Activated T-helper 1 cell treated with anti-CD3 and anti-CD28 coated beads, Interleukin-12 subunit alpha, Interleukin-12 subunit beta, Interleukin-2, Interleukin-4 antibody, amounts not matched to agents 30 ng/mL and 10 ng/mL and 1 ng/mL, durations not matched to agents 14 hours and 24 hours and 36 hours (primary cell): ENCODE measurements at regions of chr12 and their contacts with region 1.

Region 1: DNA sequence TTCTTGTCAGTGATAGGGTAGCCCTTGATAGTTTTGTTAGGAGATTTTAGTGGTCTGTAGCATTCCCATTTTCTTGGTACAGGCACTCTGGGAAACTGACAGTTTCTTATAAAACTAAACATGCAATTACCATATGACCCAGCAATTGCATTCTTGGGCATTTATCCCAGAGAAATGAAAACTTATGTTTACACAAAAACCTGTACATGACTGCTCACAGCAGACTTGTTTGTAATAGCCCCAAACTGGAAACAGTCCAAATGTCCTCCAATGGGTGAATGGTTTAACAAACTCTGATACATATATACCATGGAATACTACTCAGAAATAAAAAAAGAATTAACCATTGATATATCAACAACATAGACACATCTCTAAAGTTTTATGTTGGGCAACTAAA is 75.5 kb downstream of the BORCS5 start:
- DNase-seq: no peak
- H3K4me3 Mint-ChIP-seq: no peak overlapping the region
- H3K27ac Mint-ChIP-seq: no peak overlapping the region
- H3K4me1 Mint-ChIP-seq: peaks cover 48% of the 10 kb centered on the region
- H3K27me3 Mint-ChIP-seq: no peaks in the 10 kb centered on the region

Region 2: DNA sequence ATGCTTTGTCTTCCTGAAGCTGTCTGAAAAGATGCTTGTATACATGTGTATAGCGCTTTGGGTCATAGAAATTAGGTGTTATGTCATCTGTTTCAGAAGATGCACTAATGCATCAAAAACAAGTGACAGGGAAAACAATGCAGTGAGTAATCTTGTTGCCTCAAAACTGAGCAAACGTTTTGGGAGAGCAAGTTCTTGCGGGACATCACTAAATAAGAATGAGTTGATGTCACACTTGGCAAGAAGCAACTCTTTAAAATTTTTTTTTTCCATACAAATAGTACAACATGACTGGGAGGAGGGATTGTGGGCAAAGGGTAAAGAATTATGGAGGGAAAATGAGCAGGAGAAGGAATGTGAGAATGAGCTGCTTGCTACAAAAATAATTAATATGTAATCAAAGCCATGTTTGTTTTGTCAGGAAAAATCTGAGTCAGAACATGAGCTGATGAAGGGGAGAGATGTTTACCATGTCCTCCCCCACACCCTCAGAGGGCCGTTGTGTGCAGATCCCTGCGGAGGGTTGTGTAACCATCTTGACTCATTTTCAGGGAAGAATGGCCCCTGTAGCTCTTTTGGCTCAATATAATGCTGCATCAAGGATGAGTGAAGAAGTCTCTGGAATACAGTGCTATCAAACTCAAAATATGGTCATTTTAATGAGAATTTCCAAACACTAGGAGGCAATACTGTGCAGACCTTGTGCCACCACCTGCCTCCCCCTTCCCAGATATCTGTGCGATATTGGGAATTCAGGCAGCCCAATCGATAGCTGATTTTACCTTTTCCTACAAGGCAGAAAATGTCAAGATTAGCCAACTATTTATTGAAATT is 34.1 kb before region 1 on chr12:
- intact Hi-C with region 1: loop called (anchors 5 kb)
- DNase-seq: no peak
- H3K4me3 Mint-ChIP-seq: no peak overlapping the region
- H3K27ac Mint-ChIP-seq: no peak overlapping the region
- H3K4me1 Mint-ChIP-seq: peaks cover 42% of the 10 kb centered on the region
- H3K27me3 Mint-ChIP-seq: no peaks in the 10 kb centered on the region

Region 3: DNA sequence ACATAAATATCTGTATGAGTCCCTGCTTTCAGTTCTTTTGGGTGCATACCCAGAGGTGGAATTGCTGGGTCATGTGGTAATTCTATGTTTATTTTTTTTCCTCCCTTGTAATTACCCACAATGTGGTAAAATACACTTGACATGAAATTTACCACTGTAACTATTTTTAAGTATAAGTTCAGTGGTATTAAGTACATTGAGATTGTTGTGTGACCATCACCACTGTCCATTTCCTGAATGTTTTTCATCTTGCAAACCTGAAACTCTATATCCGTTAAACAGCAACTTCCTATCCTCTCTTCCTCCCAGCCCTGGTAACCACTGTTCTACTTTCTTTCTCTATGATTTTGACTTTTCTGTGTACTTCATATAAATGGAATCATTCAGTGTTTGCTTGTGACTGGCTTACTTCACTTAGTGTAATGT is 24.1 kb before region 1 on chr12:
- intact Hi-C with region 1: loop called (anchors 1 kb)
- DNase-seq: no peak
- H3K4me3 Mint-ChIP-seq: no peak overlapping the region
- H3K27ac Mint-ChIP-seq: peak overlapping the region; percentile 77
- H3K4me1 Mint-ChIP-seq: peaks cover 26% of the 10 kb centered on the region
- H3K27me3 Mint-ChIP-seq: no peaks in the 10 kb centered on the region

Region 4: GRCh38 chr12:12442548-12443071 is 10.2 kb after region 1 on chr12:
- intact Hi-C with region 1: loop called (anchors 1 kb)
- DNase-seq: no peak
- H3K4me3 Mint-ChIP-seq: peak overlapping the region; percentile 34
- H3K27ac Mint-ChIP-seq: peak overlapping the region; percentile 95
- H3K4me1 Mint-ChIP-seq: peaks cover 74% of the 10 kb centered on the region
- H3K27me3 Mint-ChIP-seq: no peaks in the 10 kb centered on the region